Naive thymus-derived CD4-positive, alpha-beta T cell (primary cell): ENCODE measurements at regions of chr3 and their contacts with region 1.

Region 1: DNA sequence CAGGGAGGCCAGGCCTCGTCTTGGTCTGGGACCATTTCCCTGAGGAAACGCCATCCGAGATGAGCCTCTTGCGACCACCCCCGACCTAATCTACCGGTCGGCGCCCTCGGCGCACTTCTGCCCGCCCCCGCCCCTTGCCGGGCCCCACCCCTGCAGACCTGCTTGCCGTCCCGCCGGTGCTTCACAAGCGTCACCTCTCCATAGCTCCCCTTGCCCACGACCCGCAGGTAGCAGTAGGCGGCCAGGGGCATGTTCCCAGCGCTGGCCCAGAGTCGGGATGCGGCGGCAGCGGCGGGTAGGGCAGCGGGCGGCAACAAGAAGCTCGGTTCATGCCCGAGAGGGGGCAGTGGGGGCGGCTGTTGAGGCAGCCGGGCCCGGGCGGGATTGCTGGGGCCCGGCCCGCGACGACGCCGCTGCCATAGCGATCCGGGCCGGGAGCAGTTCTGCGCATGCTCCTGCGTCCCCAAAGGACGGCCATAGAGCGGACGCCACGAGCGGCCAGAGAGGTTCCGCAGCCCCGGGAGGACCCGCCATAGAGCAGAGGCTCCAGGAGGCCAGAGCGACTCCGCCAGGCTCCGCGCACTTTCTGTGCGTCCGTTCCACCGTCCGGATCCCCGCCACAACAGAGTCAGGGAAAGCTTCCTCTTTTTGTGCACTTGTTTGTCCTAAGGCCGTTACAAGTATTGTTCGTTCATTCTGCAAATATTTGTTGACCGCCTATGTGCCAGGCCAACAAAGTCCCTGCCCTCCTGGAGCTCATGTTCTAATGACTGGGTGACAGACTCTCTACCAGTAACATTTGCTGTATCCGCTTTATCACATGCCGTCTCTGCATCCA is at the start of gene NEK4:
- DNase-seq: peak; percentile 44 to 86 (median 65)
- ATAC-seq: peak; percentile 89
- H3K4me3 ChIP-seq: peak within 1 kb of the TSS; percentile 83
- H3K4me3 Mint-ChIP-seq: peak within 1 kb of the TSS; percentile 83 to 99 (median 95)
- H3K27ac ChIP-seq: peak within 1 kb of the TSS; percentile 72
- H3K27ac Mint-ChIP-seq: peak within 1 kb of the TSS; percentile 89 to 97 (median 93)
- H3K4me1 ChIP-seq: peaks cover 5 to 16% of the 10 kb centered on the region in 2 donors
- H3K4me1 Mint-ChIP-seq: peaks cover 12 to 34% (median 23%) of the 10 kb centered on the region in 7 donors
- H3K27me3 ChIP-seq: no peaks in the 10 kb centered on the region
- H3K27me3 Mint-ChIP-seq: peaks cover 0 to 12% (median 0%) of the 10 kb centered on the region in 5 donors
- total RNA-seq, gene NEK4: 14.4 to 28.4 (median 21.1) TPM

Region 2: GRCh38 chr3:52897130-52898122 is 126.7 kb after region 1 on chr3 and contains the start of gene STIMATE:
- CTCF ChIA-PET with region 1: no interaction called
- POLR2A ChIA-PET with region 1: no interaction called
- intact Hi-C with region 1: loop called (anchors 1 to 2 kb)
- DNase-seq: peak; percentile 77 to 89 (median 86)
- ATAC-seq: peak; percentile 97
- H3K4me3 ChIP-seq: peak within 1 kb of the TSS; percentile 85
- H3K4me3 Mint-ChIP-seq: peak within 1 kb of the TSS; percentile 90 to 99 (median 95)
- H3K27ac ChIP-seq: peak within 1 kb of the TSS; percentile 72
- H3K27ac Mint-ChIP-seq: peak within 1 kb of the TSS; percentile 44 to 97 (median 86)
- H3K4me1 ChIP-seq: peaks cover 16 to 23% of the 10 kb centered on the region in 2 donors
- H3K4me1 Mint-ChIP-seq: peaks cover 37 to 51% (median 45%) of the 10 kb centered on the region in 7 donors
- H3K27me3 ChIP-seq: no peaks in the 10 kb centered on the region
- H3K27me3 Mint-ChIP-seq: no peaks in the 10 kb centered on the region
- total RNA-seq, gene STIMATE: 21.1 to 44.9 (median 34.5) TPM

Region 3: GRCh38 chr3:53009826-53010539 is 239.3 kb after region 1 on chr3:
- CTCF ChIA-PET with region 1: no interaction called
- POLR2A ChIA-PET with region 1: no interaction called
- intact Hi-C with region 1: no loop called
- DNase-seq: no peak
- ATAC-seq: no peak
- H3K4me3 ChIP-seq: no peak overlapping the region
- H3K4me3 Mint-ChIP-seq: peak overlapping the region in 2 of 10 donors; percentile 6 to 44
- H3K27ac ChIP-seq: no peak overlapping the region
- H3K27ac Mint-ChIP-seq: peak overlapping the region in 5 of 9 donors; percentile 2 to 74 (median 34)
- H3K4me1 ChIP-seq: peaks cover 0 to 10% of the 10 kb centered on the region in 2 donors
- H3K4me1 Mint-ChIP-seq: peaks cover 21 to 59% (median 38%) of the 10 kb centered on the region in 7 donors
- H3K27me3 ChIP-seq: no peaks in the 10 kb centered on the region
- H3K27me3 Mint-ChIP-seq: no peaks in the 10 kb centered on the region